ENCODE measurements at regions of chr7 and their contacts with region 1.

Region 1: GRCh38 chr7:138257459-138258196 is 181.4 kb downstream of the AKR1D1 start:
- DNase-seq: peak; percentile 47
- H3K4me3 ChIP-seq: no peak overlapping the region
- H3K27ac ChIP-seq: peak overlapping the region; percentile 48
- H3K4me1 ChIP-seq: no peaks in the 10 kb centered on the region
- H3K27me3 ChIP-seq: no peaks in the 10 kb centered on the region
- CTCF ChIP-seq: no peak
- POLR2A ChIP-seq: no peak

Region 2: GRCh38 chr7:138186951-138187351 is 70.7 kb before region 1 on chr7:
- CTCF ChIA-PET with region 1: no interaction called
- POLR2A ChIA-PET with region 1: no interaction called
- dilution Hi-C with region 1: no loop called
- intact Hi-C with region 1: loop called (anchors 2 kb)
- DNase-seq: peak; percentile 12
- H3K4me3 ChIP-seq: no peak overlapping the region
- H3K27ac ChIP-seq: peak overlapping the region; percentile 29
- H3K4me1 ChIP-seq: no peaks in the 10 kb centered on the region
- H3K27me3 ChIP-seq: no peaks in the 10 kb centered on the region
- CTCF ChIP-seq: no peak
- POLR2A ChIP-seq: no peak